ENCODE measurements at regions of chr10 and their contacts with region 1.

Region 1: DNA sequence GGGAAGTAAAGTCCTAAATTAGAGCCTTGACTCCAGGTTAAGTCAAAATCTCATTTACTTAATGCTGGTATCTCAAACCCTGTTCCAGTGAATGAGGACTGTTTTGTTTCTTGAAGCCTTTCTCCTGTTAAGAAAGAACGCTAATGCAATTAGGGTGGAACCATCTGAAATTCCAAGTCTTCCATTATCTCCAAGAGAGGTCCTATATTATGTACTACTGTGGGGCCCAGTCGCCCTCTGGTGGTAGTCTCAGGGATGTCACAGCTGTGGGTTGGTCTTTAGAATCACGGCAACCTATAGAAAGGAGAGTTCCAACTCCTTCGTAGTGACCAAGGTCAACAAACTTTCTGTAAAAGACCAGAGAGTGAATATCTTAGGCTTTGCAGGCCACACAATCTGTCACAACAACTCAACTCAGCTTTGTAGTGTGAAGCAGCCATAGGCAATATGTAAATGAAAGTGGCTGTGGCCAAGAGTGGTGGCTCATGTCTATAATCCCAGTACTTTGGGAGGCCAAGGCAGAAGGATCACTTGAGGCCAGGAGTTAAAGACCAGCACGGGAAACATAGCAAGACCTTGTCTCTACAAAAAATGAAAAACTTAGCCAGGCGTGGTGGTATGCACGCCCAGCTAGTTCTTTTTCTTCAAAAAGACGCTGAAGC is 9.3 kb downstream of the RPP38 start:
- DNase-seq: peak; percentile 86
- H3K4me3 ChIP-seq: no peak overlapping the region
- H3K27ac ChIP-seq: no peak overlapping the region
- H3K4me1 ChIP-seq: peaks cover 4% of the 10 kb centered on the region
- H3K27me3 ChIP-seq: no peaks in the 10 kb centered on the region
- CTCF ChIP-seq: peak; percentile 98

Region 2: GRCh38 chr10:14995964-14996565 is 110.4 kb before region 1 on chr10:
- CTCF ChIA-PET with region 1: no interaction called
- POLR2A ChIA-PET with region 1: no interaction called
- intact Hi-C with region 1: loop called (anchors 5 kb)
- DNase-seq: no peak
- H3K4me3 ChIP-seq: no peak overlapping the region
- H3K27ac ChIP-seq: no peak overlapping the region
- H3K4me1 ChIP-seq: no peaks in the 10 kb centered on the region
- H3K27me3 ChIP-seq: no peaks in the 10 kb centered on the region
- CTCF ChIP-seq: no peak

Region 3: DNA sequence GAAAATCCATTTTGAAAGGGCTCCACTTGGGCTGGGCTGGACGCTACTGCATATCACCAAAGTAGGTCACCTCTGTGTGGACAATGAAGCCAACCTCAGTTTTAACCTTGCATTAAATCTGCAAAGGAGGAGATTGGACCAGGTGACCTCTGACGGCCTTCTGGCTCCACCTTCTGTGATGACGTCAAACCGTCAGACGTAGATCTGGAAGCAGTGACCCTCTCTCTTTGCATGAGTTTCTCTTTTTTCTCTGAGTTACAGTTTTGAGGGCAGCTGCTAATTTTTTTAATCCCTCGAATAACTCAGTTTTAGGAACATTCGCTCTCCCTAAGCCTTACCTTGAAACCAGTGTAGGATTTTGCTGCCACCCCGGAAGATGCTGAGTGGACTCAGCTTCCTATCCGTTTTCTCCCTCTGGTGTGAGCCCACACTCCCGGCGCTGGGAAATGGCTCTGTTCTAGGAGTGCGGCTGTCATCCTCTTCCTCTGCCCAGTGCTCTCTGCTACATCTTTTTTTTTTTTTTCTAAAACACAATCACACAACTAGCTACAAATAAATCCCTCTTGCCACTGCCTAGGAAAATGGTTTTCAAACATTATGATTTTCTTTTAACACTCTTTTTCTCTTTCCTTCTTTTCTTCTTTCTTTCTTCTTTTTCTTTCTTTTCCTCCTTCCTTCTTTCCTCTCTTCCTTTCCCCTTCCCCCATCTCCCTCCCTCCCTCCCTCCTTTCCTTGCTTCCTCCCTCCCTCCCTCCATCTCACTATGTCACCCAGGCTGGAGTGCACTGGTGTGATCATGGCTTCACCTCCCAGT is 89.7 kb after region 1 on chr10:
- CTCF ChIA-PET with region 1: no interaction called
- POLR2A ChIA-PET with region 1: interaction called, 12 read pairs
- intact Hi-C with region 1: no loop called
- DNase-seq: peak; percentile 42
- H3K4me3 ChIP-seq: no peak overlapping the region
- H3K27ac ChIP-seq: no peak overlapping the region
- H3K4me1 ChIP-seq: peaks cover 15% of the 10 kb centered on the region
- H3K27me3 ChIP-seq: no peaks in the 10 kb centered on the region
- CTCF ChIP-seq: no peak